ENCODE measurements at regions of chr1 and their contacts with region 1.

Region 1: GRCh38 chr1:11645670-11646265 is 8.5 kb downstream of the FBXO2 start:
- DNase-seq: peak; percentile 75
- CTCF ChIP-seq: peak; percentile 77

Region 2: GRCh38 chr1:11295905-11296304 is 349.9 kb before region 1 on chr1:
- CTCF ChIA-PET with region 1: no interaction called
- POLR2A ChIA-PET with region 1: no interaction called
- DNase-seq: no peak
- CTCF ChIP-seq: no peak

Region 3: GRCh38 chr1:11320153-11320936 is 325.4 kb before region 1 on chr1:
- CTCF ChIA-PET with region 1: interaction called, 19 read pairs
- POLR2A ChIA-PET with region 1: no interaction called
- DNase-seq: peak; percentile 78
- CTCF ChIP-seq: peak; percentile 70

Region 4: GRCh38 chr1:11658308-11658941 is 12.7 kb after region 1 on chr1:
- CTCF ChIA-PET with region 1: interaction called, 58 read pairs
- POLR2A ChIA-PET with region 1: no interaction called
- DNase-seq: no peak
- CTCF ChIP-seq: no peak

Region 5: GRCh38 chr1:11719313-11720032 is 73.7 kb after region 1 on chr1:
- CTCF ChIA-PET with region 1: interaction called, 84 read pairs
- POLR2A ChIA-PET with region 1: no interaction called
- DNase-seq: peak; percentile 80
- CTCF ChIP-seq: peak; percentile 97

Measured in GM10248 (cell line).